Transverse colon (tissue), 4 donors: ENCODE measurements at regions of chr1 and their contacts with region 1.

Region 1: GRCh38 chr1:197614916-197615692 is 160.2 kb downstream of the DENND1B start:
- DNase-seq: peak; percentile 19
- H3K4me3 ChIP-seq: no peak overlapping the region
- H3K27ac ChIP-seq: no peak overlapping the region
- H3K4me1 ChIP-seq: no peaks in the 10 kb centered on the region
- H3K27me3 ChIP-seq: no peaks in the 10 kb centered on the region
- CTCF ChIP-seq: peak; percentile 46 to 53 (median 49)
- EP300 ChIP-seq: no peak
- POLR2A ChIP-seq: no peak

Region 2: DNA sequence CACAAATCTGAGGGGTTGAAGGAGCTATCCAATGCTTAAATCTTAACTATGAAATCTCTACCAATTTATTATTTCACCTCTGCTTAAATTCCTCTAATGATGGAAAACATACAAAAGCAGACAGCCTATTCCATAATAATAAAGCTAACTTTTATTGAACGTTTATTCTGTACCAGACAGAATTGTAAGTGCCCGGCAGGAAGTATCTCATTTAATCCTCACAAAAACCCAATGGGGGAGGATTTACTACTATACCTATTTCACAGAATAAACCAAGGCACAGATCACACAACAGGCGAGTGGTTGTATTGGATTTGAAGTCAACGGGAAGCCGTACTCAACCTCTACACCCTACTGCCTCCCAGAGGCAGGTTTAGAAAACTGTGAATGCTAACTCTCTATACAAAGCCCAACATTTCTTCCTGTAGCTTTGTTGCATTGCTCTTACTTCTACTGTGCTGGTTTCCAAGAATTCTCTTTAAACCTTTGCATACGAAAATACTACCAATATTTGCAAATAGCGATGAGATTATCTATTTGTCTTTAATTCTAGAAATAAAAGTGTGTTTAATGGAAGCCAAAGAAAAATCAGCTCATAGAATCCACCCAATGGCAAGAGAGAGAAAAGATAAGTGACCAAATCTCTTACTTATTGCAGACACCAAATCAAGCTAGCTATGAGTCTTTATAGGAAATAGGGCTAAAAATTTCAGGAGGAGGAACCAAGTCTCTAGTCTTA is 253.8 kb after region 1 on chr1:
- in situ Hi-C with region 1: loop called in 3 of 4 experiments (anchors 10 to 25 kb)
- intact Hi-C with region 1: no loop called
- DNase-seq: peak; percentile 42
- H3K4me3 ChIP-seq: no peak overlapping the region
- H3K27ac ChIP-seq: no peak overlapping the region
- H3K4me1 ChIP-seq: peaks cover 0 to 4% (median 0%) of the 10 kb centered on the region in 4 donors
- H3K27me3 ChIP-seq: no peaks in the 10 kb centered on the region
- CTCF ChIP-seq: peak; percentile 53 to 64 (median 59)
- EP300 ChIP-seq: no peak
- POLR2A ChIP-seq: no peak

Region 3: GRCh38 chr1:197884173-197884572 is 269.1 kb after region 1 on chr1:
- in situ Hi-C with region 1: loop called in 2 of 4 experiments (anchors 10 to 25 kb)
- intact Hi-C with region 1: no loop called
- DNase-seq: no peak
- H3K4me3 ChIP-seq: no peak overlapping the region
- H3K27ac ChIP-seq: no peak overlapping the region
- H3K4me1 ChIP-seq: no peaks in the 10 kb centered on the region
- H3K27me3 ChIP-seq: peaks cover 4% of the 10 kb centered on the region
- CTCF ChIP-seq: no peak
- EP300 ChIP-seq: no peak
- POLR2A ChIP-seq: no peak